ENCODE measurements at regions of chr19 and their contacts with region 1.

Region 1: DNA sequence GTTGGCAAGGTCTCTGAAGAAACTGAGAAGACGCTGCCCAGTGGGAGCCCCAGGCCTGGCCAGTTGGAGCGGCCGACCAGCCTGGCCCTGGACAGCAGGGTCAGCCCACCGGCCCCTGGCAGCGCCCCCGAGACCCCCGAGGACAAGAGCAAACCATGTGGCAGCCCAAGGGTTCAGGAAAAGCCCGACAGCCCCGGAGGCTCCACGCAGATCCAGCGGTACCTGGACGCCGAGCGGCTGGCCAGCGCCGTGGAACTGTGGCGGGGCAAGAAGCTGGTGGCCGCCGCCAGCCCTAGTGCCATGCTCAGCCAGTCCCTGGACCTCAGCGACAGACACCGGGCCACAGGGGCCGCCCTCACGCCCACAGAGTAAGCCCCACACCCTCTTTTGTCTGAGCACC is 20.1 kb upstream of the USE1 start:
- DNase-seq: no peak
- H3K4me3 ChIP-seq: no peak overlapping the region
- H3K27ac ChIP-seq: no peak overlapping the region
- H3K4me1 ChIP-seq: peaks cover 35% of the 10 kb centered on the region
- CTCF ChIP-seq: no peak

Region 2: DNA sequence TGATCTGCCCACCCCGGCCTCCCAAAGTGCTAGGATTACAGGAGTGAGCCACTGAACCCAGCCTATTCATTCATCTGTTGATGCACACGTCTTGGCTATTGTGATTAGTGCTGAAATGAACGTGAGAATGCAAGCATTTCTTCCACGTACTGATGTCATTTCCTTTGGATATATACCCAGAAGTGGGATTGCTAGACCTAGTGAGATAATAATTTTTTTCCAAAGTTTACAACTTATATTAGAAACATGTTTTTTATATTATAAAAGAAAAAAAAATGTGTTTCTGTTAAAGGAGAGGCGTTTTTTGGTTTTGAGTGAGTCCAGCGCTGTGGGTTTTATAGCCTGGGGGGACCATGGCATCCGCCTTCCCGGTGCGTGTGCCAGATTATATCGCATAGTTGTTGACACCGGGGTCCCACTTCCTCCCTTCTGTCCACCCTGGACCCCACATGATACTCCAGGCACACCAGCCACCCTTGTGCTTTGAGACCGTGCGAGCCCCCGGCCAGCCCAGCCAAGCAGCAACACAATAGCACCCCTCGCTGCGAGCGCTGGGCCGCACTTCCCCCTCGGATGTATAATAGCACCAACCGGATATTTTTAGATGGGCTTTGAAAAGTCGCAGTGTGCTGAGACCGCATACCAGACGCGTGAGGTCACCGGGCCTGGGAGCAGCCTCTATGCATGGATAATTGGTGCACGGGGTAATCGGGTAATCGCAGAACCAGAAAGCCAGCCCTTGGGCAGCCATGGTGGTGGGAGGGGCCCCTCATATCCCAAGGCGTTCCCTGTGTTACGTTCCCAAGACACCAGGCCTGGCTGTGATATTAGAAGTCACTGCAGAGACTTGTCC is 59.9 kb before region 1 on chr19:
- CTCF ChIA-PET with region 1: no interaction called
- POLR2A ChIA-PET with region 1: no interaction called
- intact Hi-C with region 1: loop called (anchors 2 kb)
- DNase-seq: peak; percentile 91
- H3K4me3 ChIP-seq: peak overlapping the region; percentile 39
- H3K27ac ChIP-seq: peak overlapping the region; percentile 74
- H3K4me1 ChIP-seq: peaks cover 57% of the 10 kb centered on the region
- CTCF ChIP-seq: peak; percentile 54; the same call in 1 of the 2 replicates

Measured in OCI-LY7 (cell line).